WTC11 (cell line): ENCODE measurements at regions of chr21 and their contacts with region 1.

Region 1: DNA sequence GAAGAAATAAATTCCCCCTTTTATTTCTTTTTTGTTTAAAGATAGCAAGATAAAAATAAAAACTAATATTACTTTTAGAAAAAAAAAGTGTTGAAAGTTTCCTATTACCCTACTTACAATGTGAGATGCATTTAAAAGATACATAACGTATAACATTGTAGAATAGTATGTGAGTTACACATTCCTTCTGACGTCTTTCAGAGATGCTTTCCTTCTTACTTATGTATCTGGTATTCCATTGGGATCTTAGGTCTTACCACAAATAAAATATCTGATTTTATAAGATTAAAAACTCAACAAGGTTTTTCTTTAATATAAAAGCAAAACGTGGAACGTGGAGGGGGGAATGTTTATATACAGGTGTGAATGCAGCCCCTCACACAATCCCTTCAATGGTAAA is 147.2 kb upstream of the ETS2 start:
- DNase-seq: no peak
- ATAC-seq: no peak
- H3K4me3 Mint-ChIP-seq: no peak overlapping the region
- H3K27ac Mint-ChIP-seq: no peak overlapping the region
- H3K4me1 Mint-ChIP-seq: peaks cover 40% of the 10 kb centered on the region
- H3K27me3 Mint-ChIP-seq: peaks cover 37% of the 10 kb centered on the region
- CTCF ChIP-seq: no peak

Region 2: DNA sequence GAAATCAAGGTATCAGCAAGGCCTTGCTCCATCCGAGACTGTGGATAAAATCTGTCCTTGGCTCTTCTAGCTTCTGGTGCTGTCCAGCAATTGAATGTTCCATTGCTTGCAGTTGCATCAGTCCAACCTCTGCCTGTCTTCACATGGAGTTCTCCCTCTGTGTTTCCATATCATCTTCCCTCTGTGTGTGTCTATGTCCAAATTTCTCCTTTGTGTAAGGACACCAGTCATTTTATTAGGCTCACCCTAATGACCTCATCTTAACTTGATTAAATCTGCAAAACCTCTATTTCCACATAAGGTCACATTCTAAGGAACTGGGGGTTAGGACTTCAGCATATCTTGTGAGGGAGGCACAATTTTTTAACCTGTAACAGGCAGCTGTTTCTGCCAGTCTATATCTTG is 244.5 kb before region 1 on chr21:
- CTCF ChIA-PET with region 1: no interaction called
- POLR2A ChIA-PET with region 1: no interaction called
- DNase-seq: no peak
- ATAC-seq: no peak
- H3K4me3 Mint-ChIP-seq: no peak overlapping the region
- H3K27ac Mint-ChIP-seq: no peak overlapping the region
- H3K4me1 Mint-ChIP-seq: peaks cover 35% of the 10 kb centered on the region
- H3K27me3 Mint-ChIP-seq: no peaks in the 10 kb centered on the region
- CTCF ChIP-seq: no peak

Region 3: DNA sequence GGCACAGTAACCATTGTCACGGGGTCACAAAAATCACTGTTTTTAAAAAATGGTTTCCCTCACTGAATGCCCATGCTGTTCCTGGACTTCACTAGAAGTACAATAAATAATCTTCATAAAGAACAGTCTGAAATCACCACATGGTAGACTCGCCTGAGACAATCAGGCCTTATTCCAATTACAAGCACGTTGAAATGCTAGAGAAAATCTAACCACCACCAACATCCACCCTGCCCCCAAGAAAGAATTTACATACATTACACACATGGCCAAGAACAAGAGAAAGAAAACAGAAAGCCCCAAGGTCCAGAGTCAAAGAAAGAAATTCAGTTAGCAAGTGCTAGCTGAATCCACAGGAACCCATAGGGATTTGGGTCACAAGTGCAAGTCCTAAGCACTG is 53.3 kb before region 1 on chr21:
- CTCF ChIA-PET with region 1: no interaction called
- POLR2A ChIA-PET with region 1: no interaction called
- DNase-seq: no peak
- ATAC-seq: peak; percentile 51
- H3K4me3 Mint-ChIP-seq: no peak overlapping the region
- H3K27ac Mint-ChIP-seq: no peak overlapping the region
- H3K4me1 Mint-ChIP-seq: peaks cover 14% of the 10 kb centered on the region
- H3K27me3 Mint-ChIP-seq: no peaks in the 10 kb centered on the region
- CTCF ChIP-seq: no peak

Region 4: DNA sequence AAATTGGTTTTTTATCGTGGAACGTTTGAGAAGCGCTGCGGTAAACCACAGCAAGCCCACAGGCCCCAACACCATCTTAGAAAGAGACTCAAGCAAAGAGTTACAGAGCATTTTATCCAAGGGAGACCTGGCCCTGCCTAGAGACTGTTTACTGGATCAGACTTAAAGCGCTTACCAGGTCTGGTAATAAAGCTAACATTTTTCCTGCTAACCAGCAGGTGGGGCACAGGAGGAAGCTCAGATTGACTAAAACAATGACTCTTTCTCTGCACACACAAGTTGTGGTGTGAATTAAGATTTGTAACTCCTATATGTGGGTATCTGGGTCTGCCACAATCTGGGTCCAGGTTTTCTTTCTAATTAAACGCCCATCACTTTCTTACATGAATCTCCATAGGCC is 10.7 kb after region 1 on chr21:
- CTCF ChIA-PET with region 1: interaction called, 12 read pairs
- POLR2A ChIA-PET with region 1: no interaction called
- DNase-seq: no peak
- ATAC-seq: peak; percentile 77
- H3K4me3 Mint-ChIP-seq: no peak overlapping the region
- H3K27ac Mint-ChIP-seq: no peak overlapping the region
- H3K4me1 Mint-ChIP-seq: peaks cover 10% of the 10 kb centered on the region
- H3K27me3 Mint-ChIP-seq: no peaks in the 10 kb centered on the region
- CTCF ChIP-seq: no peak